ENCODE measurements at regions of chr10 and their contacts with region 1.

Region 1: GRCh38 chr10:59240582-59241183 is 64.2 kb downstream of the PHYHIPL start:
- DNase-seq: peak; percentile 25
- ATAC-seq: no peak
- H3K4me3 ChIP-seq: no peak overlapping the region
- H3K27ac ChIP-seq: no peak overlapping the region
- H3K4me1 ChIP-seq: no peaks in the 10 kb centered on the region
- H3K27me3 ChIP-seq: no peaks in the 10 kb centered on the region
- CTCF ChIP-seq: peak; percentile 53
- EP300 ChIP-seq: no peak
- POLR2A ChIP-seq: no peak
- RAD21 ChIP-seq: no peak

Region 2: GRCh38 chr10:58952747-58953466 is 287.8 kb before region 1 on chr10:
- CTCF ChIA-PET with region 1: interaction called, 5 read pairs
- POLR2A ChIA-PET with region 1: no interaction called
- in situ Hi-C with region 1: loop called (anchors 10 kb)
- intact Hi-C with region 1: loop called (anchors 2 kb)
- DNase-seq: peak; percentile 53
- ATAC-seq: peak; percentile 86
- H3K4me3 ChIP-seq: no peak overlapping the region
- H3K27ac ChIP-seq: no peak overlapping the region
- H3K4me1 ChIP-seq: peaks cover 58% of the 10 kb centered on the region
- H3K27me3 ChIP-seq: no peaks in the 10 kb centered on the region
- CTCF ChIP-seq: peak; percentile 82
- EP300 ChIP-seq: no peak
- POLR2A ChIP-seq: no peak
- RAD21 ChIP-seq: peak; percentile 87

Region 3: GRCh38 chr10:59227136-59227673 is 13.5 kb before region 1 on chr10:
- CTCF ChIA-PET with region 1: no interaction called
- POLR2A ChIA-PET with region 1: no interaction called
- in situ Hi-C with region 1: no loop called
- intact Hi-C with region 1: no loop called
- DNase-seq: no peak
- ATAC-seq: peak; percentile 54
- H3K4me3 ChIP-seq: no peak overlapping the region
- H3K27ac ChIP-seq: no peak overlapping the region
- H3K4me1 ChIP-seq: peaks cover 33% of the 10 kb centered on the region
- H3K27me3 ChIP-seq: no peaks in the 10 kb centered on the region
- CTCF ChIP-seq: 0 out of 2 replicates have a peak, but pooled peaks have one; percentile 20
- EP300 ChIP-seq: no peak
- POLR2A ChIP-seq: no peak
- RAD21 ChIP-seq: no peak

Region 4: GRCh38 chr10:59465088-59465487 is 224.4 kb after region 1 on chr10:
- CTCF ChIA-PET with region 1: no interaction called
- POLR2A ChIA-PET with region 1: no interaction called
- in situ Hi-C with region 1: no loop called
- intact Hi-C with region 1: loop called (anchors 5 kb)
- DNase-seq: peak; percentile 4
- ATAC-seq: no peak
- H3K4me3 ChIP-seq: no peak overlapping the region
- H3K27ac ChIP-seq: no peak overlapping the region
- H3K4me1 ChIP-seq: no peaks in the 10 kb centered on the region
- H3K27me3 ChIP-seq: no peaks in the 10 kb centered on the region; a peak in 1 of 5 replicates
- CTCF ChIP-seq: peak; percentile 56
- EP300 ChIP-seq: no peak
- POLR2A ChIP-seq: no peak
- RAD21 ChIP-seq: no peak

Region 5: DNA sequence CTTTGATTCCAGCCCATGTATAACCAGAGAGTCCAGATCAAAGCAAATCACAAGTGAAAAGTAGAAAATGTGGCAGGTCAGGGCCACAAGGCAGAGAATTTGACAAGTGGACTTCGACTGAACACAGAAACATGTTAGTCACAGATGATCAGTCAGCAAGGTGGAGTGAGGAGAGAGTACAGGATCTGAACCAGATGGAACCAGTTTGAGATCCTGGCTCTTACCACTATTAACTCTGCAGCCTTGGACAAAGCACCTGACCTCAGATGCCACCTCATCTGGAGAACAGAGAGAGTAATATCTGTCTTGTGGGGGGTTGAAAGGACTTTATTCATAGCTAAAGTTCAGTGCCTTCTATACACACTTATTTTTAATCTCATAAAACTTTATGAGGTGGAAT is 508.2 kb after region 1 on chr10:
- CTCF ChIA-PET with region 1: no interaction called
- POLR2A ChIA-PET with region 1: no interaction called
- in situ Hi-C with region 1: no loop called
- intact Hi-C with region 1: loop called (anchors 5 kb)
- DNase-seq: no peak
- ATAC-seq: peak; percentile 57; the same call in 2 of the 3 replicates
- H3K4me3 ChIP-seq: no peak overlapping the region
- H3K27ac ChIP-seq: no peak overlapping the region
- H3K4me1 ChIP-seq: no peaks in the 10 kb centered on the region
- H3K27me3 ChIP-seq: no peaks in the 10 kb centered on the region
- CTCF ChIP-seq: no peak
- EP300 ChIP-seq: no peak
- POLR2A ChIP-seq: no peak
- RAD21 ChIP-seq: no peak

Region 6: GRCh38 chr10:59830601-59831259 is 590.0 kb after region 1 on chr10:
- CTCF ChIA-PET with region 1: no interaction called
- POLR2A ChIA-PET with region 1: no interaction called
- in situ Hi-C with region 1: no loop called
- intact Hi-C with region 1: loop called (anchors 10 kb)
- DNase-seq: peak; percentile 38
- ATAC-seq: peak; percentile 90
- H3K4me3 ChIP-seq: no peak overlapping the region
- H3K27ac ChIP-seq: no peak overlapping the region
- H3K4me1 ChIP-seq: no peaks in the 10 kb centered on the region
- H3K27me3 ChIP-seq: no peaks in the 10 kb centered on the region
- CTCF ChIP-seq: peak; percentile 73
- EP300 ChIP-seq: no peak
- POLR2A ChIP-seq: no peak
- RAD21 ChIP-seq: no peak